Psoas muscle (tissue), 8 donors: ENCODE measurements at regions of chr14 and their contacts with region 1.

Region 1: GRCh38 chr14:21476925-21477681 is at the starts of genes RAB2B and TOX4:
- DNase-seq: peak; percentile 94 to 97
- ATAC-seq: peak; percentile 98 to 100 (median 99)
- H3K4me3 ChIP-seq: peak within 1 kb of the TSS; percentile 93
- H3K27ac ChIP-seq: peak within 1 kb of the TSS; percentile 92
- H3K4me1 ChIP-seq: peaks cover 15% of the 10 kb centered on the region
- H3K27me3 ChIP-seq: no peaks in the 10 kb centered on the region
- CTCF ChIP-seq: peak; percentile 90
- total RNA-seq, gene RAB2B: 5.7 to 11.1 (median 7.4) TPM
- total RNA-seq, gene TOX4: 98.8 to 146 (median 117) TPM

Region 2: GRCh38 chr14:21383848-21384493 is 93.1 kb before region 1 on chr14 and contains the start of gene SUPT16H:
- intact Hi-C with region 1: loop called (anchors 5 to 10 kb)
- DNase-seq: peak; percentile 96 to 98
- ATAC-seq: peak; percentile 97 to 99 (median 99)
- H3K4me3 ChIP-seq: peak within 1 kb of the TSS; percentile 82
- H3K27ac ChIP-seq: peak within 1 kb of the TSS; percentile 90
- H3K4me1 ChIP-seq: peaks cover 25% of the 10 kb centered on the region
- H3K27me3 ChIP-seq: no peaks in the 10 kb centered on the region
- CTCF ChIP-seq: no peak
- total RNA-seq, gene SUPT16H: 23.6 to 29.2 (median 26.8) TPM

Region 3: GRCh38 chr14:21455911-21456667 is 21.0 kb before region 1 on chr14 and contains the start of gene CHD8:
- intact Hi-C with region 1: loop called in 1 of 2 experiments (anchors 1 kb)
- DNase-seq: peak; percentile 100
- ATAC-seq: peak; percentile 99 to 100 (median 100)
- H3K4me3 ChIP-seq: peak within 1 kb of the TSS; percentile 95
- H3K27ac ChIP-seq: peak within 1 kb of the TSS; percentile 97
- H3K4me1 ChIP-seq: peaks cover 17% of the 10 kb centered on the region
- H3K27me3 ChIP-seq: no peaks in the 10 kb centered on the region
- CTCF ChIP-seq: peak; percentile 61
- total RNA-seq, gene CHD8: 27.1 to 40.1 (median 36.1) TPM

Region 4: DNA sequence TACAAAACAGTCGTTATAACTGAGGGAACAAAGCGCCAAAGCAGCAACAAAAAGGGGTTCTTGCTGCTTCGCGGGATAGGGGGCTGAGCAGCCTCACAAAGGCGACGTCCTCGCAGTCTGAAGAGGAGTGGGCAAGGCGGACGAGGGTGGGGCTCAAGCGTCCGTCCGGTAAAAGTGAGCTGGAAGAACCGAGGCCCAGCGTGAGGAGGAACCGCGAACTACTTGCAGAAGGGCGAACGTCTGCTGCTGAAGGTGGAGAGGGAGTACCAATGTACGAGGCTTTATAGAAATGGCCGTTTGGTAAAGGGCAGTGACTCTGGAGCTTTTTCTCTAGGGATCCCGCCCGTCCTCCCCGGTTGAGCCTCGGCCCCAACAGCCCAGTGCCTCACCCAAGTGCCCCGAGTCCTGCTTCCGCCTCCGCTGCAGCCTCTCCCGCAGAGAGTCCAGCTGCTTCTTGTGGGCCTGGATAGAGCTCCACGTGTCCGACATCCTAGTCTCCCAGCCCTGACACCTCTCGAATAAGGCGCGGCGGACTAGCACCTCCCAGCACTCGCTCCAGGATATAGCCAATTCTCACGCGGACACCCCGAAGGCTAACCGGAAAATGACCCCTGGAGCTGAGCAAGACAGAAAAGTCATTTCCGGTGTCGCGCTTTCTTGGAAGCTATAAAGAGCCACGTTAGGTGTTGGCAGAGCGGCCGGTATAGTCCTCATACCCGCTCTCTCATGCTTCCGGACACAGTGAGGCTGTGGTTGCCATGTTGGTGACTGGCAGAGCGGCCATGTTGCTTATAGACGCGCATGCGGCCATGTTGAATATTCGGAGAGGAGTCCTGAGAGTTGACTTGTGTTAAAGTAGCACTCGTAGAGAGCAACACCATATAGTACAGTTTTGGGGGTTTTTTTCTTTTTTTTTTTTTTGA is 33.9 kb after region 1 on chr14 and contains the start of gene METTL3:
- intact Hi-C with region 1: loop called (anchors 2 to 5 kb)
- DNase-seq: peak; percentile 97 to 99
- ATAC-seq: peak; percentile 98 to 99 (median 99)
- H3K4me3 ChIP-seq: peak within 1 kb of the TSS; percentile 98
- H3K27ac ChIP-seq: peak within 1 kb of the TSS; percentile 90
- H3K4me1 ChIP-seq: peaks cover 15% of the 10 kb centered on the region
- H3K27me3 ChIP-seq: no peaks in the 10 kb centered on the region
- CTCF ChIP-seq: no peak
- total RNA-seq, gene METTL3: 17.5 to 22.1 (median 20.6) TPM

Region 5: GRCh38 chr14:21557084-21557901 is 80.2 kb after region 1 on chr14:
- intact Hi-C with region 1: loop called in 1 of 2 experiments (anchors 10 kb)
- DNase-seq: peak; percentile 28 to 69
- ATAC-seq: peak in 3 of 4 donors; percentile 53 to 86 (median 72)
- H3K4me3 ChIP-seq: peak overlapping the region; percentile 56
- H3K27ac ChIP-seq: no peak overlapping the region
- H3K4me1 ChIP-seq: no peaks in the 10 kb centered on the region
- H3K27me3 ChIP-seq: no peaks in the 10 kb centered on the region
- CTCF ChIP-seq: peak; percentile 78